Aorta (tissue), 5 donors: ENCODE measurements at regions of chr11 and their contacts with region 1.

Region 1: GRCh38 chr11:17694494-17695110 is 24.8 kb upstream of the MYOD1 start:
- DNase-seq: no peak
- ATAC-seq: no peak
- H3K4me3 ChIP-seq: no peak overlapping the region
- H3K27ac ChIP-seq: no peak overlapping the region
- H3K4me1 ChIP-seq: no peaks in the 10 kb centered on the region
- H3K27me3 ChIP-seq: no peaks in the 10 kb centered on the region

Region 2: DNA sequence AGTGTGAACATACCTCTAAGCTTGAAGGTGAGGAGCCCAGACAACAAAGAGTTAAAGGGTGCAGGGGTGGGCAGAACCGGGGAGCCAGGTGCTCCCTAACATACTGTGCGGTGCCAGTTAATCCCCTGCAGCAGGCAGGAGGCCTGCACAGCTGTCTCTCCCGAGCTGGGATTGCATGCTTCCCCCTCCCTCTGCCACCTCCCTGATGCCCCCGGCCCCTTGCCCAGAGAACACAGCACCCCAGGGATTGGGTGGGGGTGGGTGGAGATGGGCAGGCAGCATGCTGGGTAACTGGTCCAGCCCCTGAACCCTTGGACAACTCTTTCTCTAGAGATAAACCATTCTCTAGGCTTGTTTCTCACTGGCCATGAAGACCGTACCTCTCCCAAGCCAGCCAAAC is 42.9 kb before region 1 on chr11:
- intact Hi-C with region 1: loop called in 1 of 2 experiments (anchors 1 kb)
- DNase-seq: no peak
- ATAC-seq: no peak
- H3K4me3 ChIP-seq: no peak overlapping the region
- H3K27ac ChIP-seq: no peak overlapping the region
- H3K4me1 ChIP-seq: no peaks in the 10 kb centered on the region
- H3K27me3 ChIP-seq: peaks cover 0 to 2% of the 10 kb centered on the region in 2 donors

Region 3: GRCh38 chr11:17810746-17811145 is 116.1 kb after region 1 on chr11:
- intact Hi-C with region 1: no loop called
- DNase-seq: no peak
- ATAC-seq: no peak
- H3K4me3 ChIP-seq: no peak overlapping the region
- H3K27ac ChIP-seq: no peak overlapping the region
- H3K4me1 ChIP-seq: peaks cover 0 to 5% of the 10 kb centered on the region in 2 donors
- H3K27me3 ChIP-seq: no peaks in the 10 kb centered on the region

Region 4: DNA sequence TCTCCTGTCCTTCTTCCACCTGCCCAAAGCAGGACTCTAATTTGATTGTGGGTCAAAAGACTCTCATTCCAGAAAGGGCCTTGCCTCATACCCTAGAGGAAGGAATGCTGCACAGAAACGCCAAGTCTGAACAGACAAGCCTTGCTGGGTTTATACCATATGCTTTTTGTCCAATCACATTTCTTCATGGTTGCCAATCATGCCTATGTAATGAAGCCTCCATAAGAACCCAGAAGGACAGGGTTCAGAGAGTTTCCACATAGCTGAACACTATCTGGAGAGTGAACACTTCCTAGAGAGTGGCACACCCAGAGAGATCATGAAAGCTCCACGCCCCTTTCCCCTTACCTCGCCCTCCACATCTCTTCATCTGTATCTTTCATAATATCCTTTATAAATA is 558.6 kb after region 1 on chr11:
- intact Hi-C with region 1: no loop called
- DNase-seq: no peak
- ATAC-seq: no peak
- H3K4me3 ChIP-seq: no peak overlapping the region
- H3K27ac ChIP-seq: no peak overlapping the region
- H3K4me1 ChIP-seq: no peaks in the 10 kb centered on the region
- H3K27me3 ChIP-seq: no peaks in the 10 kb centered on the region